GM12878 (cell line): ENCODE measurements at regions of chr17 and their contacts with region 1.

Region 1: DNA sequence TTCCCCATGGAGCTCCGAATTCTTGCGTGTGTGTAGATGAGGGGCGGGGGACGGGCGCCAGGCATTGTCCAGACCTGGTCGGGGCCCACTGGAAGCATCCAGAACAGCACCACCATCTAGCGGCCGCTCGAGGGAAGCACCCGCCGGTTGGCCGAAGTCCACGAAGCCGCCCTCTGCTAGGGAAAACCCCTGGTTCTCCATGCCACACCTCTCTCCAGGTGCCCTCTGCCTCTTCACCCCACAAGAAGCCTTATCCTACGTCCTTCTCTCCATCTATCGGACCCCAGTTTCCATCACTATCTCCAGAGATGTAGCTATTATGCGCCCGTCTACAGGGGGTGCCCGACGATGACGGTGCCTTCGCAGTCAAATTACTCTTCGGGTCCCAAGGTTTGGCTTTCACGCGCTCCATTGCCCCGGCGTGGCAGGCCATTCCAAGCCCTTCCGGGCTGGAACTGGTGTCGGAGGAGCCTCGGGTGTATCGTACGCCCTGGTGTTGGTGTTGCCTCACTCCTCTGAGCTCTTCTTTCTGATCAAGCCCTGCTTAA is 617 bp upstream of the SENP3 start:
- DNase-seq: no peak
- ATAC-seq: peak; percentile 84
- H3K4me3 ChIP-seq: peak overlapping the region; percentile 92
- H3K27ac ChIP-seq: peak overlapping the region; percentile 23
- H3K4me1 ChIP-seq: peaks cover 37% of the 10 kb centered on the region
- H3K27me3 ChIP-seq: no peaks in the 10 kb centered on the region
- CTCF ChIP-seq: peak; percentile 93 to 99 (median 93); a peak in 5 of 6 replicates
- EP300 ChIP-seq: no peak
- POLR2A ChIP-seq: no peak
- RAD21 ChIP-seq: peak; percentile 74

Region 2: DNA sequence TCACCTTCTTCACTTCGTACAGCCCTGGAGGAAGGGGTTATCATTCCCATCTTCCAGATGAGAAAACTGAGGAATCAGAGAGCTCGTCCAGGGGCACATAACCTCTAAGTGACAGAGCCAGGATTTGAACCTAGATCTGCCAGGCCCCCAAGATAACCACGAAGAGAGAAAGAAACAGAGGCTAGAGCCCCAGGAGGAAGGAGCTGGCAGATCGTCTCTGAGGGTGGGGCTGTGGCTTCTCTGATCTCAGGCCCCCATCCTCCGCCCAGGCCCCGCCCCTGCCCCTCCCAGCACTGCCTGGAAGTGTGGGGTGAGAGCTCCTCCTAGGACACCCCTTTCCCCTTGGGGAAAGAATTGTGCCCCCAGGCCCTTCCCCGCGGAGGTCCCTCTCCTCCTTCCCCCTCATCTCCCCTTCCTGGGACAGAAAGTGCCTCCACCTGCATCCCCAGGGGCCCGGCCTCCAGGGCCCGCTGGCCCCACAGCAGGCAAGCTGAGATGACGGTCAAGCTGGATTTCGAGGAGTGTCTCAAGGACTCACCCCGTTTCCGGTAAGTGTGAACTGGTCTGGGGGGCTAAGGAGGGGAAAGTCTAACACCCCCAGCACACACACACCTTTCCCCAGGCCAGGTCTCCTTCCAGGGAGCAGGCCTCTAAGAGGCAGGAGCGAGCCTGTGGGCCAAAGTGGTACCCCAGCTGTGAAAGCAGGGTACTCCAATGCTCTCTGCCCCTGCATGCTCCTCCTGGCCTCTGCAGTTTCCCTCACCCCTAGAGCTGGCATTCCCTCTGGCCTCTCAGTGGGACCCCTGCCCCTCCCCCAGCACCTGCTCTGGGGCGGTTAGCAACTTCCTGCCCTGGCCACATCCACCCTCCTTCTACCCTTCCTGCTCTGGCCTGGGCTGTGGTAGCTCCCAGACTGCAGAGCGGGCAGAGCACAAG is 224.6 kb before region 1 on chr17 and contains the start of gene ACAP1:
- CTCF ChIA-PET with region 1: interaction called, 15 read pairs
- POLR2A ChIA-PET with region 1: interaction called, 3 read pairs
- RAD21 ChIA-PET with region 1: interaction called, 5 read pairs
- SMC1A ChIA-PET with region 1: no interaction called
- in situ Hi-C with region 1: no loop called
- intact Hi-C with region 1: no loop called
- DNase-seq: no peak
- ATAC-seq: peak; percentile 93
- H3K4me3 ChIP-seq: peak within 1 kb of the TSS; percentile 96
- H3K27ac ChIP-seq: peak within 1 kb of the TSS; percentile 99
- H3K4me1 ChIP-seq: peaks cover 27% of the 10 kb centered on the region
- H3K27me3 ChIP-seq: no peaks in the 10 kb centered on the region
- CTCF ChIP-seq: 0 out of 6 replicates have a peak, but pooled peaks of 1 of the 3 experiments have one; percentile 11
- EP300 ChIP-seq: peak in 1 of 2 experiments; percentile 13; a peak in 1 of 4 replicates
- POLR2A ChIP-seq: peak; percentile 45
- RAD21 ChIP-seq: no peak
- polyA plus RNA-seq, gene ACAP1: 5.7 to 25.2 TPM

Region 3: GRCh38 chr17:7435221-7435675 is 125.9 kb before region 1 on chr17 and contains the start of gene TMEM102:
- CTCF ChIA-PET with region 1: interaction called, 28 read pairs
- POLR2A ChIA-PET with region 1: interaction called, 12 read pairs
- RAD21 ChIA-PET with region 1: interaction called, 14 read pairs
- SMC1A ChIA-PET with region 1: interaction called, 35 read pairs
- in situ Hi-C with region 1: no loop called
- intact Hi-C with region 1: loop called (anchors 5 kb)
- DNase-seq: peak; percentile 97
- ATAC-seq: peak; percentile 87
- H3K4me3 ChIP-seq: peak within 1 kb of the TSS; percentile 78
- H3K27ac ChIP-seq: peak within 1 kb of the TSS; percentile 60
- H3K4me1 ChIP-seq: peaks cover 19% of the 10 kb centered on the region
- H3K27me3 ChIP-seq: peaks cover 0 to 4% of the 10 kb centered on the region in 2 experiments; a peak in 1 of 4 replicates
- CTCF ChIP-seq: no peak
- EP300 ChIP-seq: no peak
- POLR2A ChIP-seq: 0 out of 2 replicates have a peak, but pooled peaks have one; percentile 28
- RAD21 ChIP-seq: no peak
- polyA plus RNA-seq, gene TMEM102: 0.04 TPM in 1 of 2 experiments, not detected in the other

Region 4: GRCh38 chr17:7491583-7491982 is 69.5 kb before region 1 on chr17:
- CTCF ChIA-PET with region 1: interaction called, 21 read pairs
- POLR2A ChIA-PET with region 1: interaction called, 5 read pairs
- RAD21 ChIA-PET with region 1: interaction called, 7 read pairs
- SMC1A ChIA-PET with region 1: interaction called, 11 read pairs
- in situ Hi-C with region 1: no loop called
- intact Hi-C with region 1: loop called (anchors 2 kb)
- DNase-seq: no peak
- ATAC-seq: no peak
- H3K4me3 ChIP-seq: no peak overlapping the region
- H3K27ac ChIP-seq: no peak overlapping the region
- H3K4me1 ChIP-seq: no peaks in the 10 kb centered on the region
- H3K27me3 ChIP-seq: no peaks in the 10 kb centered on the region
- CTCF ChIP-seq: no peak
- EP300 ChIP-seq: no peak
- POLR2A ChIP-seq: no peak
- RAD21 ChIP-seq: no peak

Region 5: GRCh38 chr17:7548585-7549400 is 12.3 kb before region 1 on chr17 and contains the start of gene TNFSF12:
- CTCF ChIA-PET with region 1: interaction called, 20 read pairs
- POLR2A ChIA-PET with region 1: interaction called, 5 read pairs
- RAD21 ChIA-PET with region 1: interaction called, 7 read pairs
- SMC1A ChIA-PET with region 1: interaction called, 7 read pairs
- in situ Hi-C with region 1: no loop called
- intact Hi-C with region 1: no loop called
- DNase-seq: no peak
- ATAC-seq: peak; percentile 73
- H3K4me3 ChIP-seq: peak within 1 kb of the TSS; percentile 70
- H3K27ac ChIP-seq: no peak within 1 kb of the TSS
- H3K4me1 ChIP-seq: peaks cover 28% of the 10 kb centered on the region
- H3K27me3 ChIP-seq: no peaks in the 10 kb centered on the region; a peak in 1 of 4 replicates
- CTCF ChIP-seq: peak in 1 of 3 experiments; percentile 9; a peak in 1 of 6 replicates
- EP300 ChIP-seq: no peak
- POLR2A ChIP-seq: peak; percentile 74
- RAD21 ChIP-seq: no peak
- polyA plus RNA-seq, gene TNFSF12: 0.32 to 0.53 TPM

Region 6: GRCh38 chr17:7614422-7615264 is 53.5 kb after region 1 on chr17 and contains the start of gene FXR2:
- CTCF ChIA-PET with region 1: interaction called, 18 read pairs
- POLR2A ChIA-PET with region 1: interaction called, 3 read pairs
- RAD21 ChIA-PET with region 1: no interaction called
- SMC1A ChIA-PET with region 1: no interaction called
- in situ Hi-C with region 1: no loop called
- intact Hi-C with region 1: no loop called
- DNase-seq: peak; percentile 99
- ATAC-seq: peak; percentile 95
- H3K4me3 ChIP-seq: peak within 1 kb of the TSS; percentile 83
- H3K27ac ChIP-seq: peak within 1 kb of the TSS; percentile 81
- H3K4me1 ChIP-seq: peaks cover 4% of the 10 kb centered on the region; the same call in 1 of the 2 replicates
- H3K27me3 ChIP-seq: no peaks in the 10 kb centered on the region
- CTCF ChIP-seq: peak; percentile 63 to 97 (median 70); a peak in 5 of 6 replicates
- EP300 ChIP-seq: 0 out of 4 replicates have a peak, but pooled peaks of 1 of the 2 experiments have one; percentile 18
- POLR2A ChIP-seq: peak; percentile 77
- RAD21 ChIP-seq: no peak
- polyA plus RNA-seq, gene FXR2: 1.6 to 4.6 TPM

Region 7: DNA sequence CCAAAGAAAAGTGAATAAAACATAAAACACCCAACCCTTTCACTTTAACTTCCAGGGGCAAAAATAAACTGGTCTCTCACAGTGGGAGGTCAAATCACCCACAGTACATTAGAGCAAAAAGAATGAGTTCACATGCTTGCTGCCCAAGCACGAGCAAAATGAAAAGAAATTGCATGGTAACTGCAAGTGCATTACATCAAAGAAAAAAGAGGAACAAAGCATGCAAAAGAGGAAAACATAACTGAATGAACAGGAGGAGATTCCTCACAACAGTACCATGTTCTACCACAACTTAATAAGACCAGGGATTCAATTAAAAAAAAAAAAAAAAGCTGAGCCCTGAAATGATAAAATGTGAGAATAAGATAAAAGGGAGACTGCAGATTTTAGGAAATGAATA is 168.7 kb after region 1 on chr17:
- CTCF ChIA-PET with region 1: no interaction called
- POLR2A ChIA-PET with region 1: no interaction called
- RAD21 ChIA-PET with region 1: no interaction called
- SMC1A ChIA-PET with region 1: no interaction called
- in situ Hi-C with region 1: no loop called
- intact Hi-C with region 1: no loop called
- DNase-seq: no peak
- ATAC-seq: no peak
- H3K4me3 ChIP-seq: no peak overlapping the region
- H3K27ac ChIP-seq: no peak overlapping the region
- H3K4me1 ChIP-seq: no peaks in the 10 kb centered on the region
- H3K27me3 ChIP-seq: peaks cover 0 to 3% of the 10 kb centered on the region in 2 experiments; a peak in 2 of 4 replicates
- CTCF ChIP-seq: no peak
- EP300 ChIP-seq: no peak
- POLR2A ChIP-seq: no peak
- RAD21 ChIP-seq: no peak